Colonic mucosa (tissue), 4 donors: ENCODE measurements at regions of chr3 and their contacts with region 1.

Region 1: DNA sequence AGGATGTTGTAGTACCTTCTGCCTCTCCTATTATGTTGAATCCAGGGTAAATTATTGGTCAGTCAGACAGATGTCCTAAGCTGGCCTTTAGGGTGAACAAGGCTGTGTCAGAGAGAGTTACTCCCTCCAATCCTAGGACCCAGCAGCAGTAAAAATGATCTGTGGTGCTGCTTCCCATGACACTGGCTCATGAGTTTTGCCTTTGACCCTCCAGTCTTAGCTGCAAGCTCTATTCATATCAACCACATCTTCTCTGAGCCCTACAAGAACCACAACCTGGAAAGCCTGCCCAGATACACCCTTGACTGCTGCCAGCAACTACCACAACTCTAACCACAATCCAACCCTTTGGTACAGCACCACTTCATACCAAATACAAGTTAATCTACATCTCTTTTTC is 27.2 kb upstream of the PHLDB2 start:
- DNase-seq: no peak
- H3K4me3 ChIP-seq: no peak overlapping the region
- H3K27ac ChIP-seq: no peak overlapping the region
- H3K4me1 ChIP-seq: no peaks in the 10 kb centered on the region
- H3K27me3 ChIP-seq: no peaks in the 10 kb centered on the region
- CTCF ChIP-seq: no peak

Region 2: DNA sequence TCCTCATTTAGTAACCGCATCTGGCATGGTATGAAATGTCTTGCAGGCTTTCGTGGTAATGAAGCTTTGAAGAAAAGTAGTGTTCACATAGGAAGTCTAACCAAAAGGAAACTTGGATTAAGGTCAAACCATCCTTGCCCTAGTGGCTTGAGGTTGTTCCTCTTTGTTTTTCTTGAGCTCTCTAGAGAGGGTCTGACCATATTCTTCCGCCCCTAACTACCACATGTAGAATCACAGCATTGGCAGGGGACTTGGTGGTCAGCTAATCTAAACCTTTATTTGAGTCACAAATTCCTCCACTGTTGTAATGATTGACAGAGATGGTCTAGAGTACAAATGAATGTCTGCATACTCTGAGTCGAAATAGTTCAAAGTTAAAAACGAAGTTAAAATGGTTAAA is 11.9 kb before region 1 on chr3:
- intact Hi-C with region 1: loop called (anchors 2 kb)
- DNase-seq: no peak
- H3K4me3 ChIP-seq: no peak overlapping the region
- H3K27ac ChIP-seq: no peak overlapping the region
- H3K4me1 ChIP-seq: no peaks in the 10 kb centered on the region
- H3K27me3 ChIP-seq: no peaks in the 10 kb centered on the region
- CTCF ChIP-seq: no peak